ENCODE measurements at regions of chr11 and their contacts with region 1.

Region 1: GRCh38 chr11:43245466-43245865 is 66.3 kb upstream of the API5 start:
- DNase-seq: no peak
- H3K4me3 ChIP-seq: no peak overlapping the region
- H3K27ac ChIP-seq: no peak overlapping the region
- H3K4me1 ChIP-seq: no peaks in the 10 kb centered on the region
- CTCF ChIP-seq: no peak

Region 2: GRCh38 chr11:43222215-43222614 is 23.3 kb before region 1 on chr11:
- CTCF ChIA-PET with region 1: no interaction called
- POLR2A ChIA-PET with region 1: no interaction called
- intact Hi-C with region 1: no loop called
- DNase-seq: no peak
- H3K4me3 ChIP-seq: no peak overlapping the region
- H3K27ac ChIP-seq: no peak overlapping the region
- H3K4me1 ChIP-seq: no peaks in the 10 kb centered on the region
- CTCF ChIP-seq: no peak

Region 3: DNA sequence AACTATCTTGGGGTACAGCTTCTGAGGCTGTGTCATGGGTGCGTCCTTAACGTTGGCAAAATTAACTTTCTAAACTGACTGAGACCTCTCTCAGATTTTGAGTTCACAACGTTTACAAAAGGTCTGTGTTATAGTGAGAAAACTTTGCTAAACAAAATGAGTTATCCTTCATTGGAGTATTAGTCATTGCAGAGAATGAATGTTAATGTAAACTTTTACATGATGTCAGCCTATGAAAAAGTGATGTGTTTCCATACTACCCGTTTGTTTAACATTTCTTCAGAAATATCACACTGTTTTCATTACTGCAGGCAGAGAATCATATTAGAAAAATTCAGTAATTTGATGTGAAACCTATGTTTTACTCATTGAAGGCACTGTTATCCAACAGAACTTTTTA is 467.2 kb after region 1 on chr11:
- CTCF ChIA-PET with region 1: no interaction called
- POLR2A ChIA-PET with region 1: no interaction called
- intact Hi-C with region 1: loop called (anchors 5 kb)
- DNase-seq: no peak
- H3K4me3 ChIP-seq: no peak overlapping the region
- H3K27ac ChIP-seq: no peak overlapping the region
- H3K4me1 ChIP-seq: no peaks in the 10 kb centered on the region
- CTCF ChIP-seq: no peak

Region 4: GRCh38 chr11:44178381-44178780 is 932.9 kb after region 1 on chr11:
- CTCF ChIA-PET with region 1: no interaction called
- POLR2A ChIA-PET with region 1: no interaction called
- intact Hi-C with region 1: no loop called
- DNase-seq: no peak
- H3K4me3 ChIP-seq: no peak overlapping the region
- H3K27ac ChIP-seq: no peak overlapping the region
- H3K4me1 ChIP-seq: no peaks in the 10 kb centered on the region
- CTCF ChIP-seq: no peak

Measured in OCI-LY7 (cell line).